WTC11 (cell line): ENCODE measurements at regions of chr17 and their contacts with region 1.

Region 1: GRCh38 chr17:49223517-49224197 is 6.9 kb downstream of the PHOSPHO1 start:
- DNase-seq: peak; percentile 92
- ATAC-seq: peak; percentile 64
- H3K4me3 Mint-ChIP-seq: peak overlapping the region; percentile 76
- H3K27ac Mint-ChIP-seq: no peak overlapping the region
- H3K4me1 Mint-ChIP-seq: peaks cover 28% of the 10 kb centered on the region
- H3K27me3 Mint-ChIP-seq: peaks cover 76% of the 10 kb centered on the region
- CTCF ChIP-seq: peak; percentile 95

Region 2: GRCh38 chr17:49180303-49180702 is 43.4 kb before region 1 on chr17:
- CTCF ChIA-PET with region 1: interaction called, 13 read pairs
- POLR2A ChIA-PET with region 1: no interaction called
- DNase-seq: peak; percentile 80
- ATAC-seq: peak; percentile 90
- H3K4me3 Mint-ChIP-seq: no peak overlapping the region
- H3K27ac Mint-ChIP-seq: no peak overlapping the region
- H3K4me1 Mint-ChIP-seq: no peaks in the 10 kb centered on the region
- H3K27me3 Mint-ChIP-seq: peaks cover 8% of the 10 kb centered on the region
- CTCF ChIP-seq: peak; percentile 73

Region 3: GRCh38 chr17:49191917-49192741 is 31.5 kb before region 1 on chr17:
- CTCF ChIA-PET with region 1: interaction called, 26 read pairs
- POLR2A ChIA-PET with region 1: no interaction called
- DNase-seq: peak; percentile 91
- ATAC-seq: peak; percentile 68
- H3K4me3 Mint-ChIP-seq: peak overlapping the region; percentile 96
- H3K27ac Mint-ChIP-seq: peak overlapping the region; percentile 98
- H3K4me1 Mint-ChIP-seq: peaks cover 10% of the 10 kb centered on the region
- H3K27me3 Mint-ChIP-seq: no peaks in the 10 kb centered on the region; the same call in 1 of the 2 replicates
- CTCF ChIP-seq: no peak

Region 4: DNA sequence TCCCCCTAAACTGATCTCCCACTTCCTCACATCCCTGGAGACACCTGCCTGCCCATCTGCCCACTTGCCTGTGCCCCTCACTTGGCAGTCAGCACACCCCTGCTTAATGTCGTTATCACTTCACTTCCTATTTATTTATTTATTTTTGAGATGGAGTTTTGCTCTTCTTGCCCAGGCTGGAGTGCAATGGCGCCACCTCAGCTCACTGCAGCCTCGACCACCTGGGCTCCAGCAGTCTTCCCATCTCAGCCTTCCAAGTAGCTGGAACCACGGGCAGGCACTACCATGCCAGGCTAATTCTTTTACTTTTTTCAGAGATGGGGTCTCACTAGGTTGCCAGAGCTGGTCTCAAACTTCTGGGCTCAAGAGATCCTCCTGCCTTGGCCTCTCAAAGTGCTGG is 30.4 kb after region 1 on chr17:
- CTCF ChIA-PET with region 1: interaction called, 10 read pairs
- POLR2A ChIA-PET with region 1: no interaction called
- DNase-seq: no peak
- ATAC-seq: peak; percentile 50; the same call in 1 of the 2 replicates
- H3K4me3 Mint-ChIP-seq: no peak overlapping the region
- H3K27ac Mint-ChIP-seq: no peak overlapping the region
- H3K4me1 Mint-ChIP-seq: no peaks in the 10 kb centered on the region
- H3K27me3 Mint-ChIP-seq: peaks cover 4% of the 10 kb centered on the region
- CTCF ChIP-seq: no peak